ENCODE measurements at regions of chr16 and their contacts with region 1.

Region 1: DNA sequence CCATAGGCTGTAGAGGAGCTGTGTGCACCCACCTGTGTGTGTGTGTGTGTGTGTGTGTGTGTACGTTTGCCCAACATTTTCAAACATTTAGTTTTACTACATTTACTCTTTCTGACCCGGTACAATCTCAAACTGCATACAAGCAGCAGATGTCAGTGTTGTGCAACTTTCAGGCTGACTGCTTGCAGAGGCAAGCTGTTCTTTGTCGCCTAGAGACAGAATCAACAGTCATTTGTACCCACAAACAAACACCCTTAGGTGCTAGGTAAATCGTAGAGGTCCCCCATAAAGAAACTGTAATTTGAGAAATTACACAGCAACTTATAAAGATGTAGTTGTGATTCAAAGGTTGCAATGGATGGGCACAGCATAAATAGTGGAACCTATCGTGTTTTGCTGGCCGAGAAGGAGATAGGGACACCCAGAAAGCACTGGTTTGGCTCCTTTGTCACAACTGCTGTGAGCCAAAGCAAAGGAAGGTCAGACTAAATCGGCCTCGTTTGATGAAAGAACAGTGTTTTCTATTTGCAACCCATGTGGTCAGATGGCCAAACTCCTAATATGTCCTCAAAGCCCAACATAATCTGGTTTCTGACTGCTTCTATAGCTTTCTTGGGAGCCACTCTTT is 478.4 kb downstream of the TOX3 start:
- DNase-seq: peak; percentile 67
- H3K4me3 ChIP-seq: no peak overlapping the region
- H3K27ac ChIP-seq: no peak overlapping the region
- H3K4me1 ChIP-seq: peaks cover 3% of the 10 kb centered on the region
- H3K27me3 ChIP-seq: peaks cover 6% of the 10 kb centered on the region
- CTCF ChIP-seq: peak; percentile 60

Region 2: DNA sequence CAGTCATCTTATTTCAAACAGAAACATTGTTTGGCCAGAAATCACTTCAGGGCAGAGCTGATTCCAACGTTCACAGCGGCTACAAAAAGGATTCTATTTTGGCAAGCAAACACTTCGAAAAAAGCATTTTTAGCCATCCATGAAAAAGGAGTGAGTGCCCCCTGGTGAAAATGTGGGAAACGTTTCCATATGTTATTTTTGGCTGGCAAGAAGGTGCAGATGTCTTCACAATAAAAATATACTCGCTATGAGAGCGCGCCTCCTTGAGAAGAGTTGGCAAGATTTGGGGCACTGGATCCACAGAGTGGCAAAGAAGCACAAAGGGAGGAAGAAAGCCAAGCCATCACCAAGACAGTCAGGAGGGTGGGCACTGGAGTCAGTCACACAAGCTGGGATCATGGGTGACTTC is 793.1 kb after region 1 on chr16:
- CTCF ChIA-PET with region 1: interaction called, 17 read pairs
- POLR2A ChIA-PET with region 1: no interaction called
- intact Hi-C with region 1: loop called (anchors 1 kb)
- DNase-seq: peak; percentile 80
- H3K4me3 ChIP-seq: no peak overlapping the region
- H3K27ac ChIP-seq: no peak overlapping the region
- H3K4me1 ChIP-seq: peaks cover 4% of the 10 kb centered on the region
- H3K27me3 ChIP-seq: peaks cover 24% of the 10 kb centered on the region
- CTCF ChIP-seq: peak; percentile 71

Region 3: GRCh38 chr16:52912565-52913173 is 844.1 kb after region 1 on chr16:
- CTCF ChIA-PET with region 1: interaction called, 15 read pairs
- POLR2A ChIA-PET with region 1: no interaction called
- intact Hi-C with region 1: loop called (anchors 1 kb)
- DNase-seq: peak; percentile 79
- H3K4me3 ChIP-seq: no peak overlapping the region
- H3K27ac ChIP-seq: no peak overlapping the region
- H3K4me1 ChIP-seq: no peaks in the 10 kb centered on the region
- H3K27me3 ChIP-seq: peaks cover under 1% of the 10 kb centered on the region
- CTCF ChIP-seq: peak; percentile 89

Region 4: GRCh38 chr16:53022374-53022773 is 953.8 kb after region 1 on chr16:
- CTCF ChIA-PET with region 1: interaction called, 15 read pairs
- POLR2A ChIA-PET with region 1: no interaction called
- intact Hi-C with region 1: loop called (anchors 1 kb)
- DNase-seq: peak; percentile 79
- H3K4me3 ChIP-seq: no peak overlapping the region
- H3K27ac ChIP-seq: no peak overlapping the region
- H3K4me1 ChIP-seq: no peaks in the 10 kb centered on the region
- H3K27me3 ChIP-seq: no peaks in the 10 kb centered on the region
- CTCF ChIP-seq: peak; percentile 74

Region 5: GRCh38 chr16:53509906-53510703 is 1441.5 kb after region 1 on chr16:
- CTCF ChIA-PET with region 1: no interaction called
- POLR2A ChIA-PET with region 1: no interaction called
- intact Hi-C with region 1: loop called (anchors 5 kb)
- DNase-seq: peak; percentile 74
- H3K4me3 ChIP-seq: no peak overlapping the region
- H3K27ac ChIP-seq: no peak overlapping the region
- H3K4me1 ChIP-seq: no peaks in the 10 kb centered on the region
- H3K27me3 ChIP-seq: no peaks in the 10 kb centered on the region
- CTCF ChIP-seq: peak; percentile 96